Adrenal gland (tissue), 19 donors: ENCODE measurements at regions of chr3 and their contacts with region 1.

Region 1: DNA sequence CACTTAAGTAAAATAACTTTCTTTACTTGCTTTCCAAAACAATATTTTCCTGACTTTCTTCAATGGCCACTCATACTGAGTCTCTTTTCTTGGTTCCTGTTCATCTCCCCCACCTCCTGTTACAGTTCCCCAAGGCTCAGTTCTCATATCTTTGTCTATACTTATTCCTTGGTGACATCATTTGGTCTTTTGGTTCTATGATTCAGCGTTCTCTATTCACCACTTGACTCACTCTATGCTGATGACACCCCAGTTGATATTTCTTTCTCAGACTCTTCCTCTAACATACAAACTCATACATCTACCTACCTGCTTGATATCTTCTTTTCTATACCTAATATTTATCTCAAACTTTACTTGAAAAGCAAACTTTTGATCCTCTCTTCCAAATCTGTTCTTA is 85.0 kb upstream of the P3H2 start:
- DNase-seq: no peak
- H3K4me3 ChIP-seq: no peak overlapping the region
- H3K27ac ChIP-seq: no peak overlapping the region
- H3K4me1 ChIP-seq: peaks cover 0 to 3% of the 10 kb centered on the region in 2 donors
- H3K27me3 ChIP-seq: no peaks in the 10 kb centered on the region
- CTCF ChIP-seq: no peak
- POLR2A ChIP-seq: no peak

Region 2: GRCh38 chr3:189222927-189223636 is 982.7 kb before region 1 on chr3:
- intact Hi-C with region 1: no loop called
- DNase-seq: no peak
- H3K4me3 ChIP-seq: no peak overlapping the region
- H3K27ac ChIP-seq: no peak overlapping the region
- H3K4me1 ChIP-seq: peaks cover 0 to 5% of the 10 kb centered on the region in 2 donors
- H3K27me3 ChIP-seq: no peaks in the 10 kb centered on the region
- CTCF ChIP-seq: no peak
- POLR2A ChIP-seq: no peak

Region 3: DNA sequence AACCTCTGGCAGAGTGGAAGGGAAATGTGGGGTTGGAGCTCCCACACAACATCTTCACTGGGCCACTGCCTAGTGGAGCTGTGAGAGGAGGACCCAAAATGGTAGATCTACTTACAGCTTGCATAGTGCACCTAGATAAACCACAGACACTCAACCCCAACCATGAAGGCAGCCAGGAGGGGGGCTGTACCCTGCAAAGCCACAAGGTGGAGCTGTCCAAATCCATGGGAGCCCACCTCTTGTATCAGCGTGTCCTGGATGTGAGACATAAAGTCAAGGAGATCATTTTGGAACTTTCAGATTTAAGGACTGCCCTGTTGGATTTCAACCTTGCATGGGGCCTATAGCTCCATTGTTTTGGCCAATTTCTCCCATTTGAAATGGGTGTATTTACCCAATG is 553.7 kb before region 1 on chr3:
- intact Hi-C with region 1: no loop called
- DNase-seq: peak in 2 of 7 donors; percentile 2 to 22
- H3K4me3 ChIP-seq: no peak overlapping the region
- H3K27ac ChIP-seq: no peak overlapping the region
- H3K4me1 ChIP-seq: no peaks in the 10 kb centered on the region
- H3K27me3 ChIP-seq: no peaks in the 10 kb centered on the region
- CTCF ChIP-seq: peak in 1 of 6 experiments; percentile 20
- POLR2A ChIP-seq: no peak

Region 4: GRCh38 chr3:189961525-189962161 is 244.1 kb before region 1 on chr3:
- intact Hi-C with region 1: loop called (anchors 5 kb)
- DNase-seq: peak; percentile 77 to 95 (median 82)
- H3K4me3 ChIP-seq: no peak overlapping the region
- H3K27ac ChIP-seq: peak overlapping the region in 2 of 5 donors; percentile 49 to 62
- H3K4me1 ChIP-seq: no peaks in the 10 kb centered on the region
- H3K27me3 ChIP-seq: no peaks in the 10 kb centered on the region
- CTCF ChIP-seq: peak; percentile 89 to 98 (median 96)
- POLR2A ChIP-seq: no peak

Region 5: DNA sequence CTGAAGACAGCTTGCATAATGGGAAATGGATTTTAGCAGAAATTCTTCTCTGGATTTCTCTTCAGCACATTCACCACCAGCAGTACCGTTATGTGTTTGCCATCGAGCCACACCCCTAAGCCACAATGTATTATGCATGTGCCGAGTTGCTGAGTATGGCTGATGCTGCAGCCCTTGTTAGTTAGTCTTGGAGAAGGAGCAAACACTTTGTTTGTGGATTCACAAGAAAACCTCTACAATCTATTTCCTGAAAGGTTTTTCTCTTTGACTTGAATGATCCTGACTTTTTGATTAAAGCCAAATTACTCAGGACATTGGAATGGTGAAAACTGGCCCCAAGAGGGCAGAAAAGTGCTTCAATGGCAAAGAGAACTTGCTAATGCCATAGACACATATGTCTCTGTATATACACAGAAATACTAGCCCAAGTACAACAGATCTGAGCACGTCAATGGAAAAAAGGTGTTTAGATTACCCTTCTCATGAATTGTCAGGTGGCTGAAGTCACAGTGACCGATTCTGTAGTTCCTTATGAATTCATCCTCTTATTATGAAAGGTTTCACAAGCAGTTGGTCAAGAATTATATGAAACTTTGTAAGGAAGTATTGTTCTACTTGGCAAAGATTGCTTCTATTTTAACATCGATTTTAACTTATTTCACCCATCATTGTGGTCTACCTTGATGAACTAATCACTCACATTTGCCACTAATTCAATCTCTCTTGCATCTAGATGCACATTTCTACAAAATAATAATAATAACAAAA is 188.0 kb before region 1 on chr3:
- intact Hi-C with region 1: loop called in 1 of 2 experiments (anchors 10 kb)
- DNase-seq: peak; percentile 33 to 80 (median 62)
- H3K4me3 ChIP-seq: no peak overlapping the region
- H3K27ac ChIP-seq: no peak overlapping the region
- H3K4me1 ChIP-seq: peaks cover 0 to 12% of the 10 kb centered on the region in 2 donors
- H3K27me3 ChIP-seq: no peaks in the 10 kb centered on the region
- CTCF ChIP-seq: peak; percentile 20 to 57 (median 46)
- POLR2A ChIP-seq: no peak

Region 6: GRCh38 chr3:190345027-190345821 is 139.5 kb after region 1 on chr3:
- intact Hi-C with region 1: no loop called
- DNase-seq: peak in 5 of 7 donors; percentile 41 to 60 (median 56)
- H3K4me3 ChIP-seq: peak overlapping the region in 1 of 4 donors; percentile 4
- H3K27ac ChIP-seq: peak overlapping the region; percentile 34 to 86 (median 68)
- H3K4me1 ChIP-seq: peaks cover 0 to 15% of the 10 kb centered on the region in 2 donors
- H3K27me3 ChIP-seq: no peaks in the 10 kb centered on the region
- CTCF ChIP-seq: no peak
- POLR2A ChIP-seq: no peak

Region 7: GRCh38 chr3:190384241-190384863 is 178.6 kb after region 1 on chr3:
- intact Hi-C with region 1: no loop called
- DNase-seq: peak; percentile 36 to 64 (median 43)
- H3K4me3 ChIP-seq: no peak overlapping the region
- H3K27ac ChIP-seq: no peak overlapping the region
- H3K4me1 ChIP-seq: peaks cover 0 to 3% of the 10 kb centered on the region in 2 donors
- H3K27me3 ChIP-seq: no peaks in the 10 kb centered on the region
- CTCF ChIP-seq: peak; percentile 38 to 76 (median 68)
- POLR2A ChIP-seq: no peak